Dorsolateral prefrontal cortex (tissue), 120 donors: ENCODE measurements at regions of chr6 and their contacts with region 1.

Region 1: DNA sequence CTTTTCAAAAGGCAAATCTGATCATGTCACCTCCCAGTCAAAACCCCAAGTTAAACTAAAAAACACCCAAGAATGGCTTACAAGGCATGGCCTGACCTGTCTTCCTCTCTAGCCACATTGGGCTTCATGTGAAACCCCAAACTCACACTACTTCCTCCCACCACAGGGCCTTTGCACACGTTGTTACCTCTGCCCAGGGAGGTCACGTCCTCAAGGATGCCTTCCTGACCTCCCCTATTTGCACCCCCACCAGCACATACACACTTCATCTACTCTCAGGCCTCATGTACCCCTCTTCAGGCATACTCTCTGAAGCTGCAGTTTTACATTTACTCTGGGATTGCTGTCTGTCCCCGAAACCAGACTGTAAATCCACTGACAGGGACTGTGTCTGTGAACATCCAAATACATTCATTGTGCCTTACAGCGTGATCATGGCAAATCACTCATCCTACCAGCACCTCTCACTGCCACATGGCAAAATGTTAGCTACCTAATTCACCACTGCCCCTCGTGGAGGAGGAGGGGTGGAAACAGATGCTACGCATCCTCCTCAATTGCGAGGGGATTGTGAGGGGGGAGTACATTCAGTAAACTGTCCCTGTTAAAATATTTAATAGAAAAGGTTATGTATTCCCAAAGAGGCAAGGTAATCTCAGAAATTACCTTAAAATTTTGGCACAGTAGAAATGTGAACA is 6.0 kb downstream of the EZR start:
- DNase-seq: no peak
- H3K4me3 ChIP-seq: peak overlapping the region in 11 of 59 donors; percentile 19 to 82 (median 77)
- H3K27ac ChIP-seq: peak overlapping the region in 6 of 59 donors; percentile 4 to 47 (median 24)
- H3K27me3 ChIP-seq: peaks cover 0 to 33% (median 0%) of the 10 kb centered on the region in 45 donors
- CTCF ChIP-seq: no peak

Region 2: GRCh38 chr6:158744986-158745430 is 68.2 kb before region 1 on chr6:
- intact Hi-C with region 1: no loop called
- DNase-seq: no peak
- H3K4me3 ChIP-seq: no peak overlapping the region
- H3K27ac ChIP-seq: no peak overlapping the region
- H3K27me3 ChIP-seq: no peaks in the 10 kb centered on the region
- CTCF ChIP-seq: no peak

Region 3: GRCh38 chr6:158758451-158758861 is 54.7 kb before region 1 on chr6:
- intact Hi-C with region 1: loop called in 1 of 2 experiments (anchors 5 kb)
- DNase-seq: peak in 2 of 10 donors; percentile 27 to 77
- H3K4me3 ChIP-seq: no peak overlapping the region
- H3K27ac ChIP-seq: no peak overlapping the region
- H3K27me3 ChIP-seq: no peaks in the 10 kb centered on the region
- CTCF ChIP-seq: no peak

Region 4: GRCh38 chr6:159390381-159390780 is 577.2 kb after region 1 on chr6:
- intact Hi-C with region 1: no loop called
- DNase-seq: no peak
- H3K4me3 ChIP-seq: no peak overlapping the region
- H3K27ac ChIP-seq: no peak overlapping the region
- H3K27me3 ChIP-seq: peaks cover 0 to 30% (median 0%) of the 10 kb centered on the region in 45 donors
- CTCF ChIP-seq: no peak